Head of caudate nucleus (tissue), 42 donors: ENCODE measurements at regions of chr11 and their contacts with region 1.

Region 1: DNA sequence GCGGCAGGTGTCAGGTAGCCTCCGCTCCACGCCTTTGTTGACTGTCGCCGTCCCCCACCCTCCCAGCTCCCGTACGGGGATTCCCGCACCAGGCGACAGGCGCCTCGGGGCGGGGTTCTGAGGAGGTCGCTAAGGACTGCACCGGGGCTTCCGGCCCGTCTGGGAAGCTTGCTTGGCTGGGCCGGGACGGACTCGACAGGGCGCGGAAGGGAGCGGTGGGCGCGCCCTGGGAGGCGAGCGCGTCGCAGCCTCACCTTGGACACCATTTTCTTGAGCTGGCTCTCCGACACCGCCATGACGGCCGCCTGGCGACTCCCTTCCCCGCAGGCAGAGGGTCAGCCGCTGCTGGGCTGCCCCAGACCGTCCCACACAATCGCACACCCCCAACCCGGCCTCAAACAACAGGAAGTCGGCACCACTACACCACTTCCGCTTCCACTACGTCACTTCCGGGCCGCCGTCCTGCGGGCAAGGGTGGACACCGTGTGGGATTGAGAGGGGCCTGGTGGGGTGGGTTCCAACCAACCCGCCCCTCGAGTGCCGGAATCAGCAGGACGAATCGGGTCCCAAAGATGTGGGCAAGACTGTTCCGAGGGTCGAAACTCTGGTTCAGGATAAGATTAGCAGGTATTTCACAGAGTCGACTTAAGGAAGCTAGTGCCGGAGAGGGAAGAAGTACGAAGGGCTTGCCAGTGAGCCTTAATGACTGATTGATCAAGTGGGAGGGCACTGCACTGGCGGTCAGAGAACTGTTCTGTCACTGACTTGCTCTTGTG is at the start of gene TSG101:
- DNase-seq: peak; percentile 84 to 98 (median 95)

Region 2: DNA sequence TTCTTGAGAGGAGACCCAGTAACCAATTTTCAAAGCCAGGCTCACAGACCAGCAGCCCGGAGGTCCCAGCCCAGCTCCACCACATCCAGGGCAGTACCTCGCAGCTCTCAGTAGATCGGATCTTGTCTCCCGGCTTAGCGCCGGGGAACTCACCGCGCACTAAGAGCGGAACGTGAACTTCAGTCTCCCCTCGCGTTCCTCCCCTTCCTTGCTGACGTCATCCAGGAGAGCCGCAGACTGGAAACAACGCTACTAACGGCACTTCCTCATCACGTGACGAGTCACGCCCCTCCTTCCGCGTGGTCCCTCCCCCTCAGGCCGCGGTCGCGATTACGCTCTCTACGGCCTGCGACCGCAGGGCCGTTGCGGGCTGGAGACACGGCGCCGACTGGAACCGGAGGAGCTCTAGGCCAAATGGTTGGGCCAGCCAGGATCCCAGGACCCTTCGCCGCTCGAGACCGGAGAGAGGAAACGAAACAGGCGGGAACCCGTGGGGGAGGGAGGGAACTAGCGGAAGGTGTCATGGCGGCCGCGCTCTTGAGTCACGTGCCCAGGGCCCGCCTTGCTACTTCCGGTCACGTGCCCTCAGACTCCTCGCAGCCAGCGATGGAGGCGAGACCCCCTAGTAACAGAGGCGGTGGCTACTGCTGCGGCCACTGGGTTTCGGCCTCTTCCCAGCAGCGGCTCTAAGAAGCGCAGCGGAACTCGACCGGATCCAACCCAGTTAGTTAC is 204.6 kb before region 1 on chr11 and contains the starts of genes GTF2H1 and HPS5:
- intact Hi-C with region 1: loop called (anchors 2 kb)
- DNase-seq: peak; percentile 92 to 99 (median 97)

Region 3: DNA sequence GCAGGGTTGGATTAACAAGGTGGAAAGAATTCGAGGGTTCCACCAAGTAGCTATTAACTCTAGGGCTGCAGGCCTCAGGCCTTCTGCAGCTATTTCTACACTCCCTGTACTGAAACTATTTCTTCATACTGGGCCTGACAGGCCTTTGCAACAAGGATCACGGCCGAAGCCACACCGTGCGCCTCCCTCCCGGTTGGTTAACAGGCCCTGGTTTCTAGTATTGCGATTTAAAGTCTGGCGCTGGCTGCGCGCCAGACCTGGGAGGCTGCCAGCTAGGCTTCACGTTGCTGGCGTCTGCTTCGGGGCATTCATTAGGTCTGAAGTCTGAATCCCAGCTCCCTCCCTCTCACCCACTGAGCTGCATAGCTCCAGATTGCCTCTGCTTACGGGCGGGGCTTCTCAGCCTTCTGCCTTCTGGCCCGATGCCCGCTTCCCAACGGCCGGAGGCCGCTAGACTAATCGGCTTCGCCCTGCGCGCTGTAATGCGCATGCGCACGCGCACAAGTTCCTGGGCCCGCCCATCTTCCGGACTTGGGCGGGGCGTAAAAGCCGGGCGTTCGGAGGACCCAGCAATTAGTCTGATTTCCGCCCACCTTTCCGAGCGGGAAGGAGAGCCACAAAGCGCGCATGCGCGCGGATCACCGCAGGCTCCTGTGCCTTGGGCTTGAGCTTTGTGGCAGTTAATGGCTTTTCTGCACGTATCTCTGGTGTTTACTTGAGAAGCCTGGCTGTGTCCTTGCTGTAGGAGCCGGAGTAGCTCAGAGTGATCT is 130.8 kb before region 1 on chr11:
- intact Hi-C with region 1: loop called (anchors 10 kb)
- DNase-seq: peak; percentile 87 to 98 (median 96)

Region 4: GRCh38 chr11:18634140-18635032 is 107.7 kb after region 1 on chr11 and contains the start of gene SPTY2D1:
- intact Hi-C with region 1: loop called (anchors 5 kb)
- DNase-seq: peak; percentile 98 to 100 (median 99)

Region 5: GRCh38 chr11:18706330-18707243 is 179.9 kb after region 1 on chr11:
- intact Hi-C with region 1: loop called (anchors 10 kb)
- DNase-seq: peak in 34 of 42 donors; percentile 36 to 86 (median 64)